PC-3 (cell line): ENCODE measurements at regions of chr1 and their contacts with region 1.

Region 1: GRCh38 chr1:155871390-155871789 is 12.0 kb downstream of the SYT11 start:
- DNase-seq: no peak
- ATAC-seq: no peak
- H3K4me3 ChIP-seq: no peak overlapping the region
- H3K27ac ChIP-seq: no peak overlapping the region
- H3K4me1 ChIP-seq: no peaks in the 10 kb centered on the region
- H3K27me3 ChIP-seq: no peaks in the 10 kb centered on the region
- CTCF ChIP-seq: no peak

Region 2: GRCh38 chr1:155911156-155912055 is 40.0 kb after region 1 on chr1 and contains the start of gene RIT1:
- CTCF ChIA-PET with region 1: no interaction called
- POLR2A ChIA-PET with region 1: interaction called, 13 read pairs
- intact Hi-C with region 1: no loop called
- DNase-seq: peak; percentile 85
- ATAC-seq: peak; percentile 76
- H3K4me3 ChIP-seq: peak within 1 kb of the TSS; percentile 83
- H3K27ac ChIP-seq: peak within 1 kb of the TSS; percentile 76
- H3K4me1 ChIP-seq: peaks cover 32% of the 10 kb centered on the region
- H3K27me3 ChIP-seq: no peaks in the 10 kb centered on the region
- CTCF ChIP-seq: no peak
- total RNA-seq, gene RIT1: 14.7 and 18.8 TPM in 2 replicates

Region 3: GRCh38 chr1:155978325-155978972 is 107.1 kb after region 1 on chr1 and contains the start of gene ARHGEF2:
- CTCF ChIA-PET with region 1: no interaction called
- POLR2A ChIA-PET with region 1: no interaction called
- intact Hi-C with region 1: no loop called
- DNase-seq: peak; percentile 71
- ATAC-seq: peak; percentile 54
- H3K4me3 ChIP-seq: peak within 1 kb of the TSS; percentile 97
- H3K27ac ChIP-seq: peak within 1 kb of the TSS; percentile 57
- H3K4me1 ChIP-seq: peaks cover 52% of the 10 kb centered on the region
- H3K27me3 ChIP-seq: no peaks in the 10 kb centered on the region
- CTCF ChIP-seq: no peak; the same call in 1 of the 2 replicates
- total RNA-seq, gene ARHGEF2: 65.9 and 70.8 TPM in 2 replicates